ENCODE measurements at regions of chr13 and their contacts with region 1.

Region 1: GRCh38 chr13:70043685-70044084 is 63.9 kb upstream of the ATXN8OS start:
- ATAC-seq: no peak
- H3K4me3 ChIP-seq: no peak overlapping the region
- H3K27ac ChIP-seq: no peak overlapping the region
- H3K4me1 ChIP-seq: no peaks in the 10 kb centered on the region

Region 2: GRCh38 chr13:70125693-70126092 is 82.0 kb after region 1 on chr13:
- in situ Hi-C with region 1: loop called in 1 of 9 experiments (anchors 25 kb)
- ATAC-seq: no peak
- H3K4me3 ChIP-seq: no peak overlapping the region
- H3K27ac ChIP-seq: no peak overlapping the region
- H3K4me1 ChIP-seq: no peaks in the 10 kb centered on the region